ENCODE measurements at regions of chr7 and their contacts with region 1.

Region 1: DNA sequence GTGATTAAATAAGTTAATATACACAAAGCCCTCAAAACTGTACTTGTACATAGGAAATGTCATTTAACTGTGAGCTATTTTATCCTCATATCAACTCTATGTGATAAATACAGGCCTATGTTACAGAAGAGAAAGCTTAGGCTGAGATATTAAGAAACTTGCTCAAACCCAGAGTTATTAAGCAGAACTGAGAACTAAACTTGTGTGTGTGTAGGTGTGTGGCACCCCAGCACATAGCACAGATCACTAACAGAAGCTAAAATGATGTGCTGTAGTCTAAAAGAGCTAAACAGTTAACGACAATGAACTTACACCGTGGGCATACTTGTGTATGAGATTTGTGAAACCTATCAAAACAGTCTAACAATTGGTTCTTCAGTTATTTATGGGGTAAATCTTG is 34.5 kb downstream of the MTPN start:
- DNase-seq: no peak
- ATAC-seq: peak; percentile 78
- H3K4me3 ChIP-seq: no peak overlapping the region; the same call in 1 of the 2 replicates
- H3K27ac ChIP-seq: no peak overlapping the region
- H3K4me1 ChIP-seq: peaks cover 20% of the 10 kb centered on the region
- H3K27me3 ChIP-seq: no peaks in the 10 kb centered on the region
- CTCF ChIP-seq: no peak
- EP300 ChIP-seq: peak in 1 of 2 experiments; percentile 80; a peak in 2 of 4 replicates
- POLR2A ChIP-seq: no peak
- RAD21 ChIP-seq: no peak

Region 2: GRCh38 chr7:135965602-135966001 is 23.0 kb after region 1 on chr7:
- CTCF ChIA-PET with region 1: interaction called, 12 read pairs
- POLR2A ChIA-PET with region 1: interaction called, 6 read pairs
- RAD21 ChIA-PET with region 1: interaction called, 27 read pairs
- SMC1A ChIA-PET with region 1: interaction called, 34 read pairs
- in situ Hi-C with region 1: no loop called
- intact Hi-C with region 1: loop called (anchors 5 kb)
- DNase-seq: peak; percentile 37
- ATAC-seq: peak; percentile 62
- H3K4me3 ChIP-seq: no peak overlapping the region; the same call in 1 of the 2 replicates
- H3K27ac ChIP-seq: peak overlapping the region; percentile 31; the same call in 1 of the 2 replicates
- H3K4me1 ChIP-seq: peaks cover 7% of the 10 kb centered on the region; the same call in 1 of the 2 replicates
- H3K27me3 ChIP-seq: no peaks in the 10 kb centered on the region
- CTCF ChIP-seq: no peak
- EP300 ChIP-seq: peak; percentile 62 to 75; a peak in 2 of 4 replicates
- POLR2A ChIP-seq: no peak
- RAD21 ChIP-seq: no peak

Region 3: DNA sequence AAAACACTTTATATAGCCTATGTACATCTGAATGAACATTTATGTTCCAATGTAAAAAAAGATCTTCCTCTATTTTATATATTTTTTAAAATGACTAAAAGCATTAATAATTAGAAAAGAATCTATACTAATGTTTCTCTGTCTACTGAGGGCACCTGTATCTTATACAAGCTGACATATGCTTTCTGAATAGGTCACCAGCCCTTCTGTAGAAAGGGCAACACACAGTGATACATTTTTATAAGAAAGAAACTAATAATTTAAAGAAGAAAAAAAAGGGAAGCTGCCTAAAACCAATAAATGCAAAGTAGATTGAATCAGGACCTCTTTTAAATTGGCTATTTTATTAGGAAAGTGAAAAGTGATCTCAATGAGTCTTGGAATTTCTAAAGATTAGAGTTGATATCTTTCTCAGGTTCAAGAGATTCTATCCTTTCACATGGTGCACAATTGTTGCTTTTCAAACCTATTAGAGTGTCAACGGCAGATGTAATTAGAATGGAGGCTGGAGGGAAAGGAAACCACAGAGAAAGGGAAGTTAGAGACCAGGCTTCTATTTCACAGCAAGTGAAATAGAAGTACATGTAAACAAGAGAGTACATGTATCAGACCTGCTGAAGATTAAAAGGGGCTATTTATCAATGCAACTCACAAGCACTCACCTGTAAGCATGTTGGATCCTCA is 28.2 kb after region 1 on chr7:
- CTCF ChIA-PET with region 1: interaction called, 12 read pairs
- POLR2A ChIA-PET with region 1: interaction called, 6 read pairs
- RAD21 ChIA-PET with region 1: interaction called, 27 read pairs
- SMC1A ChIA-PET with region 1: interaction called, 34 read pairs
- in situ Hi-C with region 1: no loop called
- intact Hi-C with region 1: loop called (anchors 5 kb)
- DNase-seq: peak; percentile 66
- ATAC-seq: peak; percentile 69
- H3K4me3 ChIP-seq: no peak overlapping the region
- H3K27ac ChIP-seq: peak overlapping the region; percentile 41
- H3K4me1 ChIP-seq: peaks cover 20% of the 10 kb centered on the region; the same call in 1 of the 2 replicates
- H3K27me3 ChIP-seq: no peaks in the 10 kb centered on the region
- CTCF ChIP-seq: no peak
- EP300 ChIP-seq: peak in 1 of 2 experiments; percentile 42; a peak in 1 of 4 replicates
- POLR2A ChIP-seq: no peak
- RAD21 ChIP-seq: no peak

Region 4: GRCh38 chr7:135993950-135994349 is 51.3 kb after region 1 on chr7:
- CTCF ChIA-PET with region 1: no interaction called
- POLR2A ChIA-PET with region 1: no interaction called
- RAD21 ChIA-PET with region 1: interaction called, 3 read pairs
- SMC1A ChIA-PET with region 1: interaction called, 12 read pairs
- in situ Hi-C with region 1: no loop called
- intact Hi-C with region 1: no loop called
- DNase-seq: no peak
- ATAC-seq: peak; percentile 84
- H3K4me3 ChIP-seq: no peak overlapping the region
- H3K27ac ChIP-seq: no peak overlapping the region
- H3K4me1 ChIP-seq: peaks cover 3% of the 10 kb centered on the region
- H3K27me3 ChIP-seq: no peaks in the 10 kb centered on the region
- CTCF ChIP-seq: no peak
- EP300 ChIP-seq: no peak
- POLR2A ChIP-seq: no peak
- RAD21 ChIP-seq: no peak

Region 5: GRCh38 chr7:136030862-136031318 is 88.3 kb after region 1 on chr7:
- CTCF ChIA-PET with region 1: no interaction called
- POLR2A ChIA-PET with region 1: no interaction called
- RAD21 ChIA-PET with region 1: no interaction called
- SMC1A ChIA-PET with region 1: no interaction called
- in situ Hi-C with region 1: no loop called
- intact Hi-C with region 1: no loop called
- DNase-seq: peak; percentile 37
- ATAC-seq: peak; percentile 91
- H3K4me3 ChIP-seq: no peak overlapping the region
- H3K27ac ChIP-seq: no peak overlapping the region
- H3K4me1 ChIP-seq: peaks cover 4% of the 10 kb centered on the region
- H3K27me3 ChIP-seq: no peaks in the 10 kb centered on the region
- CTCF ChIP-seq: no peak
- EP300 ChIP-seq: peak in 1 of 2 experiments; percentile 63; a peak in 1 of 4 replicates
- POLR2A ChIP-seq: no peak
- RAD21 ChIP-seq: no peak

Region 6: GRCh38 chr7:136114966-136115762 is 172.6 kb after region 1 on chr7:
- CTCF ChIA-PET with region 1: no interaction called
- POLR2A ChIA-PET with region 1: no interaction called
- RAD21 ChIA-PET with region 1: no interaction called
- SMC1A ChIA-PET with region 1: no interaction called
- in situ Hi-C with region 1: no loop called
- intact Hi-C with region 1: no loop called
- DNase-seq: no peak
- ATAC-seq: peak; percentile 99
- H3K4me3 ChIP-seq: no peak overlapping the region
- H3K27ac ChIP-seq: no peak overlapping the region
- H3K4me1 ChIP-seq: no peaks in the 10 kb centered on the region
- H3K27me3 ChIP-seq: no peaks in the 10 kb centered on the region
- CTCF ChIP-seq: peak; percentile 77 to 79 (median 79)
- EP300 ChIP-seq: no peak
- POLR2A ChIP-seq: no peak
- RAD21 ChIP-seq: peak; percentile 61

Measured in GM12878 (cell line).